ENCODE measurements at regions of chr5 and their contacts with region 1.

Region 1: DNA sequence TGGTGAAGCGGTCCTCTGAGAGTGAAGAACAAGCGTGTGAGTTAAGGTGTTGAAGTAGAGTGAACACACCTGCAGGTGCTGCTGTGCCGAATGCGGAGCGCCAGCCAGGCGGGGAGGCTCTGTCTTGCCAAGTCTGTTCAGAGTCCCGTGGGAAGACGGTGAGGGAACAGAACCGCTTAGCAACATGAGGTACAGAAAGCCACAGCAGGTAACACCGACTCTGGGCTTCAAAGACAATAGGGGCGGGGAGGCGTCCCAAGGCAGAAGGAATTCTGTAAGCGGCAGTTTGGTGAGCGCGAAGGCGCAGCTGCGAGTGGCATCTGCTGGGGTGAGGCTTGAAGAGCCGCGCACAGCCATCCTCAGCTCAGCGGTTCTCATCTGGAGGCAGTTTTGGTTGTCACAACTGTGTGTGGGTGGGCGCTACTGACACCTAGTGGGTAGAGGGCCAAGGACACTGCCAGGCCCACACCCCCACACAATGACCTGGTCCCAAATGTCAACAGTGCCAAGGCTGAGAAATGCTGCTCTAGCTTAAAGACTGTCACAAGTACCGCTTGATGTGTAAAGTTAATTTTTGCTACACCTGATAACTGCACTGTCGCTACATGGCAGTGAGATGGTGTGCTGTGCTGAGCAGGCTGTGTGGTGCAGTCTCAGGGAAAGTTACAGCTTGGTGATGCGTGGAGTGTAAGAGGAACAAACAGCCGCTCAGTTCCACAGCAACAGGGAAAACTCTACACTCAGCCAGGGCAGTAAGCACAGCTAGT is 67.4 kb upstream of the TBC1D9B start:
- DNase-seq: peak; percentile 58
- ATAC-seq: peak; percentile 84
- H3K4me3 Mint-ChIP-seq: no peak overlapping the region
- H3K27ac Mint-ChIP-seq: peak overlapping the region; percentile 76
- H3K4me1 Mint-ChIP-seq: peaks cover 51% of the 10 kb centered on the region
- H3K27me3 Mint-ChIP-seq: no peaks in the 10 kb centered on the region
- CTCF ChIP-seq: no peak

Region 2: GRCh38 chr5:178895651-178896571 is 1079.2 kb before region 1 on chr5 and contains the start of gene ZFP2:
- CTCF ChIA-PET with region 1: no interaction called
- POLR2A ChIA-PET with region 1: no interaction called
- intact Hi-C with region 1: no loop called
- DNase-seq: peak; percentile 41
- ATAC-seq: peak; percentile 93
- H3K4me3 Mint-ChIP-seq: peak within 1 kb of the TSS; percentile 82
- H3K27ac Mint-ChIP-seq: no peak within 1 kb of the TSS
- H3K4me1 Mint-ChIP-seq: peaks cover 12% of the 10 kb centered on the region
- H3K27me3 Mint-ChIP-seq: no peaks in the 10 kb centered on the region
- CTCF ChIP-seq: no peak
- total RNA-seq, gene ZFP2: 0.44 and 0.95 TPM in 2 replicates

Region 3: DNA sequence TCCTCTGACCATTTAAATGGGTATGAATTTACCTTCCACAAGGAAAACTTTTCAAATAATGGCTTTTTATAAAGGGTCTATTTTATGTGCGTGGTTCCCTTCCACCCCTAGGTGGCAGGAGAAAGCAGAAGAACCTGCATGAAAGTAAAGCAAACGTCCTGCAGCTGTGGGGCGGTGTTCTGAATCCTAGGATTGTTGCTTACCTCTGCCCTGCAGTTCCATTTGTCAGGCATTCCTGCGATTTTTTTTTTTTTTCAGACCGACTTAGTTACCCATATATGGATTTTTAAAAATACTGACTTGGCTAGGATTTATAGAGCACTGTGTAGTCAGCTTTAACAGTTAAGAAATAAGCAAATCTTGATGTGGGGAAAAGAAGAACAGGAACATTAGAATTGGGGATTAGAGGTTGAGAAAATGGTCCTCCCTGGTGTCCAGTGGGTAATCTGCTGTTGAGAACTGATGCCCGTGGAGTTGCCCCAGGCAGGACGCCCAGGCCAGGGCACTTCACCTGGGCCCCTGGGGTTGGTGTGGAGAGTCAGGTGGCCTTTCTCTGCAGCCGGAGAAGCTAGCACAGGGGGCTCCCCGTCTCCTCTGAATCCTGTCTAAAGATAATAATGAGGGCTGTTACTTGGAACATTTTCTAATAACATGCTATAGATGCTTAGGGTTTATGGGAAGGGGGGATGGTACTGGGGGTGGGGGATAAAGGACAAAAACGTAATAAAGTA is 211.7 kb before region 1 on chr5:
- CTCF ChIA-PET with region 1: interaction called, 5 read pairs
- POLR2A ChIA-PET with region 1: no interaction called
- intact Hi-C with region 1: loop called (anchors 1 kb)
- DNase-seq: no peak
- ATAC-seq: peak; percentile 71
- H3K4me3 Mint-ChIP-seq: no peak overlapping the region
- H3K27ac Mint-ChIP-seq: no peak overlapping the region
- H3K4me1 Mint-ChIP-seq: peaks cover 51% of the 10 kb centered on the region
- H3K27me3 Mint-ChIP-seq: no peaks in the 10 kb centered on the region
- CTCF ChIP-seq: peak; percentile 74

Region 4: GRCh38 chr5:179858586-179859427 is 116.3 kb before region 1 on chr5 and contains the start of gene MRNIP:
- CTCF ChIA-PET with region 1: interaction called, 5 read pairs
- POLR2A ChIA-PET with region 1: interaction called, 3 read pairs
- intact Hi-C with region 1: loop called (anchors 2 kb)
- DNase-seq: peak; percentile 92
- ATAC-seq: peak; percentile 94
- H3K4me3 Mint-ChIP-seq: peak within 1 kb of the TSS; percentile 96
- H3K27ac Mint-ChIP-seq: peak within 1 kb of the TSS; percentile 89
- H3K4me1 Mint-ChIP-seq: peaks cover 33% of the 10 kb centered on the region
- H3K27me3 Mint-ChIP-seq: no peaks in the 10 kb centered on the region
- CTCF ChIP-seq: no peak
- total RNA-seq, gene MRNIP: 54.6 and 70.0 TPM in 2 replicates

Region 5: DNA sequence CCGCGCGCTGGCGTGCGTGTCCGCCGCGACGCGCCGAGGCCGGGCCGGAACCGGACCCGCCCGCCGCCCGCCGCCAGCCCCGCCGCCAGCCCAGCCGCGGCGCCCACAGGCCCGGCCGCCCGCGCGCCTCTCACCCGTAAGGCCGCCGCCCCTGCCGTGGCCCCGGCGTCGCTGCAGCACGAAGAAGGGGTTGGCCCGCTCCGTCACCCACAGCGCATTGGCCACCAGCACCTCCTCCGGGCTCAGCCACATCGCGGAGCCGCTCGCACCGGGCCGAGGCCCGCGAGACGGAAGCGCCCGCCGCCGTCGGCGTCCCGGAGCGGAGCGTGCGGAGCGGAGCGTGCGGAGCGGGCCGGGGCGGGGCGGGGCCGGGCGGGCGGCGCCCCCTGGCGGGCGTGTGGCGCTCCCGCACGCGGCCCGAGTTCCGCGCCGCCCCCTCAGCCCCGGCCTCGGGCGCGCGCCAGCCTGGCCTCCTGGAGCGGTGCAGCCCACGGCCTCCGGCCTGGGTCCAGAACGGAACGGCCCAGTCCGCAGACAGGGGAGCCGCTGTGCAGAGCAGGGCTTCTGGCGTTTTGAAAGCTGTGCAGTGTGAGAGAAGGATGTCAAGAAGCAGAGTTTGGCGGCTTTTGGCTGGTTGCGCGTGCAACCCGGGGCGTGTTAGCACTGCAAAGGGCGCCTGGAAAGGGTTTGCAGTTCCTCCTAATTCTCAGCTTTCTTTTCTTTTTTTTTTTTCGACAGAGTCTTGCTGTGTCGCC is 67.4 kb before region 1 on chr5 and contains the start of gene TBC1D9B:
- CTCF ChIA-PET with region 1: interaction called, 11 read pairs
- POLR2A ChIA-PET with region 1: interaction called, 6 read pairs
- intact Hi-C with region 1: loop called (anchors 1 kb)
- DNase-seq: peak; percentile 74
- ATAC-seq: peak; percentile 90
- H3K4me3 Mint-ChIP-seq: peak within 1 kb of the TSS; percentile 87
- H3K27ac Mint-ChIP-seq: peak within 1 kb of the TSS; percentile 83
- H3K4me1 Mint-ChIP-seq: peaks cover 29% of the 10 kb centered on the region
- H3K27me3 Mint-ChIP-seq: no peaks in the 10 kb centered on the region
- CTCF ChIP-seq: no peak
- total RNA-seq, gene TBC1D9B: 111 and 117 TPM in 2 replicates

Region 6: GRCh38 chr5:180071531-180072255 is 96.6 kb after region 1 on chr5 and contains the start of gene RNF130:
- CTCF ChIA-PET with region 1: no interaction called
- POLR2A ChIA-PET with region 1: no interaction called
- intact Hi-C with region 1: loop called (anchors 2 kb)
- DNase-seq: peak; percentile 91
- ATAC-seq: peak; percentile 83
- H3K4me3 Mint-ChIP-seq: peak within 1 kb of the TSS; percentile 89
- H3K27ac Mint-ChIP-seq: peak within 1 kb of the TSS; percentile 84
- H3K4me1 Mint-ChIP-seq: peaks cover 28% of the 10 kb centered on the region
- H3K27me3 Mint-ChIP-seq: peaks cover 2% of the 10 kb centered on the region
- CTCF ChIP-seq: no peak
- total RNA-seq, gene RNF130: 17.6 and 18.5 TPM in 2 replicates

Measured in activated B cell treated with CpG ODN at 0.5 μM for 24 hours (primary cell).